ENCODE measurements at regions of chr11 and their contacts with region 1.

Region 1: GRCh38 chr11:57751676-57752253 is at the start of gene BTBD18:
- DNase-seq: no peak
- H3K4me3 ChIP-seq: no peak within 1 kb of the TSS
- H3K27ac ChIP-seq: no peak within 1 kb of the TSS
- H3K27me3 ChIP-seq: no peaks in the 10 kb centered on the region
- CTCF ChIP-seq: peak; percentile 56
- polyA plus RNA-seq, gene BTBD18: not detected in 2 replicates

Region 2: GRCh38 chr11:57568330-57568766 is 183.4 kb before region 1 on chr11:
- CTCF ChIA-PET with region 1: no interaction called
- POLR2A ChIA-PET with region 1: no interaction called
- DNase-seq: peak; percentile 33
- H3K4me3 ChIP-seq: peak overlapping the region; percentile 96
- H3K27ac ChIP-seq: peak overlapping the region; percentile 68
- H3K27me3 ChIP-seq: no peaks in the 10 kb centered on the region
- CTCF ChIP-seq: peak; percentile 94

Region 3: DNA sequence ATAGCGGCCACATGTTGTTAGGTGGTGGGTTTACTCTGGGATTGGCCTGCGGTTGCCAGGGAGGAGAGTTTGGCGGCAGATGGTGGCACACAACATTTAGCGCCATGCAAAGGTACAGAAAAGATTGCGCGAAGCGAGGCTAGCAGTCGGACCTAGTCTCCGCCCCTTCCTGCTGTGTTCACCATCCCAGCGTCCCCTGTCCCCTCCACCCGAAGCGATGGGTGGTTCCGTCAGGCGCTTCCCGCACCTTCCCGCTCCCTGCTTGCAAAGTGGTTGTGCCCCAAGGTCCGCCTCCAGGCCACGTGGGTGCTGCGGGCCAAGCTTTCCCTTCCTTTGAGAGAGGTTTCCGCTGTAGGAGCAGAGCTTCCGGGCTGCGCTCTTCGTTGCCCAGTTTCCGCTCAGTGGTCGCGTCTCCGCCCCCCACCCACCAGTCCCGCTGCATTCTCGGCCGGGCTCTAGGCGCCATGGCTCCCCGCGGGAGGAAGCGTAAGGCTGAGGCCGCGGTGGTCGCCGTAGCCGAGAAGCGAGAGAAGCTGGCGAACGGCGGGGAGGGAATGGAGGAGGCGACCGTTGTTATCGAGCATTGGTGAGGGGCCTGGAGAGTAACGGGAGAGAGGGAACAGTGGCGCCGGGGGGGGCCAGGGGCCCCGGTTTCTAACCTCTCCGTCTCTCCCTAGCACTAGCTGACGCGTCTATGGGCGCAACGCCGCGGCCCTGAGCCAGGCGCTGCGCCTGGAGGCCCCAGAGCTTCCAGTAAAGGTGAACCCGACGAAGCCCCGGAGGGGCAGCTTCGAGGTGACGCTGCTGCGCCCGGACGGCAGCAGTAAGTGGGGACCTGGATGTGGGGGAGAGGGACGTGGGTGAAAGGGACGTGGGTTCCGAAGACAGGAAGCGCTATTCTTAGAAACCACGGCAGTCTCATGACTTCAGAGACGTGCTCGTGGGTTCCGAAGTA is 10.4 kb before region 1 on chr11 and contains the start of gene SELENOH:
- CTCF ChIA-PET with region 1: interaction called, 10 read pairs
- POLR2A ChIA-PET with region 1: interaction called, 4 read pairs
- DNase-seq: peak; percentile 94
- H3K4me3 ChIP-seq: peak within 1 kb of the TSS; percentile 96
- H3K27ac ChIP-seq: peak within 1 kb of the TSS; percentile 89
- H3K27me3 ChIP-seq: no peaks in the 10 kb centered on the region
- CTCF ChIP-seq: no peak
- polyA plus RNA-seq, gene SELENOH: 94.8 and 104 TPM in 2 replicates

Region 4: GRCh38 chr11:58524232-58525036 is 772.7 kb after region 1 on chr11:
- CTCF ChIA-PET with region 1: interaction called, 12 read pairs
- POLR2A ChIA-PET with region 1: no interaction called
- DNase-seq: peak; percentile 80
- H3K4me3 ChIP-seq: no peak overlapping the region
- H3K27ac ChIP-seq: no peak overlapping the region
- H3K27me3 ChIP-seq: no peaks in the 10 kb centered on the region
- CTCF ChIP-seq: peak; percentile 89